ENCODE measurements at regions of chr18 and their contacts with region 1.

Region 1: GRCh38 chr18:44107187-44107586 is 573.5 kb upstream of the SETBP1 start:
- DNase-seq: no peak
- H3K4me3 ChIP-seq: no peak overlapping the region
- H3K27ac ChIP-seq: no peak overlapping the region
- H3K4me1 ChIP-seq: no peaks in the 10 kb centered on the region
- H3K27me3 ChIP-seq: no peaks in the 10 kb centered on the region
- CTCF ChIP-seq: no peak

Region 2: GRCh38 chr18:44986933-44987332 is 879.7 kb after region 1 on chr18:
- CTCF ChIA-PET with region 1: no interaction called
- POLR2A ChIA-PET with region 1: interaction called, 10 read pairs
- intact Hi-C with region 1: no loop called
- DNase-seq: no peak
- H3K4me3 ChIP-seq: no peak overlapping the region
- H3K27ac ChIP-seq: no peak overlapping the region
- H3K4me1 ChIP-seq: no peaks in the 10 kb centered on the region
- H3K27me3 ChIP-seq: no peaks in the 10 kb centered on the region
- CTCF ChIP-seq: no peak